A673 (cell line): ENCODE measurements at regions of chr3 and their contacts with region 1.

Region 1: DNA sequence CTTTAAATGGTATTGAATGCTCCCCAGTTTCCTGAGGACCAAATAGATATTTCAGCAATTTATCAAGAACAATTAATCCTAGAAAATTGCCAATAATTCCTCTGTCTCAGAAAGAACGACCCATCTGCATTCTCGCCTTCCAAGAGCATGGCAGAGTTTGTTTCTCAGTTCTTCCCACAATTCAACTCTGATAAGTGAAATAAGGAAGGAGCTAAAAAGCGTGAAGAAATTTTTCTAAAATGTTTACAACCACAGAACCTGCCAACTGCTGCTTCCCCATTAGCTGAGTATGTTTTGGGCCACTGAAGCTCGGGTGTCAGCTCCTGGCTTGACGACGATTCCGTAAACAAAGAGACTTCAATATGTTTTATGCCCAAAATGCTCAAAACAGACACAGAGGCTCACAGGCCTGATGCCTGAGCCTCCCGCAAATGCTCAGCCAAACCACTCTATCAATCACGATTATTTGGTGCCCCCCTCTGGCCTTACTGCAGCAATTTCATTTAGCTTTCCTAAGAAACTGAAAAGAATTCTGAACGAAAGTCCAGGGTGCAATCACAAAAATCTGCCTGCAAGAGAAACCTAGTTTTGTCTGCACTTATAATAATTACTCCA is 259.2 kb upstream of the CCDC54 start:
- DNase-seq: peak; percentile 93
- H3K4me3 ChIP-seq: no peak overlapping the region
- H3K27ac ChIP-seq: peak overlapping the region; percentile 59
- H3K4me1 ChIP-seq: peaks cover 17% of the 10 kb centered on the region
- H3K27me3 ChIP-seq: no peaks in the 10 kb centered on the region
- CTCF ChIP-seq: peak; percentile 86

Region 2: DNA sequence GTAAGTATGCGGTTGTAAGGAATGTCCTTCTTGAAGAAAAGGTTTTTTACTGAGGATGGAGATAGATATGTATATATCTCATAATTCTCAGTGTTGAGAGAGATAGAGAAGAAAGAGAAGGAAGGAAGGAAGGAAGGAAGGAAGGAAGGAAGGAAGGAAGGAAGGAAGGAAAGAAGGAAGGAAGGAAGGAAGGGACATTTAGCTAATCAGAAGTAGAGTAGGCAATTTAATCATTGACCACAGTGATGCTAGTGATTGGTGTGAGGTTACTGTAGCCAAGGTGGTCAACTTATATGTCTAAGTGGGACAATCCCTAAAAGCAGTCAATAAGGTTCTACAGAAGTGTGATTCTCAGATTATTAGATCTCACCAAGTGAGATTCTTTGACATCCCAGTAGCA is 497.4 kb before region 1 on chr3:
- CTCF ChIA-PET with region 1: no interaction called
- POLR2A ChIA-PET with region 1: interaction called, 6 read pairs
- intact Hi-C with region 1: loop called (anchors 1 kb)
- DNase-seq: peak; percentile 83
- H3K4me3 ChIP-seq: no peak overlapping the region
- H3K27ac ChIP-seq: peak overlapping the region; percentile 88
- H3K4me1 ChIP-seq: peaks cover 13% of the 10 kb centered on the region
- H3K27me3 ChIP-seq: no peaks in the 10 kb centered on the region
- CTCF ChIP-seq: no peak

Region 3: DNA sequence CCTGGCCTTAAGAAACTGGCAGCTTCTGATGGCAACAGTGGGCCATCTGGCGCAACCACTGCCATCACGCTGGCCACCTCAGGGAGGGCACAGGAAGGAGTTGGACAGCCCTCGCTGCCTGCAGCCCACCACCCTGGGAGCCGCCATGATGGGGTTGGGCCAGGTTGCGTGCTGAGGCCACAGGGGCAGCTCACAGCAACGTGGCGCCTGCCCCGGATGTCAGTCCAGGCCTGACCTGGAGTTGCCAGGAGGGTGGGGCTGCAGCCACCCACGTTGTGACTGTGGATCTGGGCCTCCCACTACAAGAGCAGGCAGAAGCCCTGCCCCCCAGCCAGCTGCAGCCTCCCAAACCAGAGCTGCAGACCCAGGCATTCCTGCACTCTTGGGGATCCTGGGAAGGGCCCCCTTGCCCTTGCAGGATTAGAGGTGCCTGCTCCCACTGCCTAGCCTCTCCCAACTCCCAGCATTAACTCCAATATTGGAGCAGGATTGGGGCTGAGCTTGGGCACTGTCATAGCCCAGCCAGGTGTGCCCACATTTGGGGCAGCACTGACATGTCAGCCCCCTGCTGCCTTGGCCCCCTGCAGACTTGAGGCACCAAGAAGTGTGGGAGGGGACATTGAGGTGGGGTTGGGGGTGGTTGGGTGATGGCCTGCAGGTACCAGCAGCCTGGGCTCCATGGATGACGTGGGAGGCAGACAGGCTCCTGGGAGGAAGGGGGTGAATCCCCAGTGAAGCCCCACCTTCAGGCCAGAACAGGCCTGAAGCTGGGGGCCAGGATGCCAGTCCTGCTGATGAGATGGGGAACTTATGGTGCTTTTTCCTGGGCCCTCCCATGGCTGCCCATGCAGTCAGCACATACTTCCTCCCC is 209.6 kb before region 1 on chr3:
- CTCF ChIA-PET with region 1: no interaction called
- POLR2A ChIA-PET with region 1: no interaction called
- intact Hi-C with region 1: no loop called
- DNase-seq: no peak
- H3K4me3 ChIP-seq: no peak overlapping the region
- H3K27ac ChIP-seq: no peak overlapping the region
- H3K4me1 ChIP-seq: no peaks in the 10 kb centered on the region
- H3K27me3 ChIP-seq: no peaks in the 10 kb centered on the region
- CTCF ChIP-seq: no peak

Region 4: GRCh38 chr3:107767897-107768605 is 650.0 kb after region 1 on chr3:
- CTCF ChIA-PET with region 1: no interaction called
- POLR2A ChIA-PET with region 1: no interaction called
- intact Hi-C with region 1: no loop called
- DNase-seq: peak; percentile 37
- H3K4me3 ChIP-seq: no peak overlapping the region
- H3K27ac ChIP-seq: no peak overlapping the region
- H3K4me1 ChIP-seq: no peaks in the 10 kb centered on the region
- H3K27me3 ChIP-seq: no peaks in the 10 kb centered on the region
- CTCF ChIP-seq: no peak